Activated CD4-positive, alpha-beta T cell treated with anti-CD3 and anti-CD28 coated beads, Interleukin-2, amount 10 ng/mL, durations not matched to agents 7 days and 5 days (primary cell): ENCODE measurements at regions of chr13 and their contacts with region 1.

Region 1: GRCh38 chr13:48896312-48896711 is 79.4 kb upstream of the FNDC3A start:
- DNase-seq: no peak
- H3K4me3 Mint-ChIP-seq: no peak overlapping the region
- H3K27ac Mint-ChIP-seq: no peak overlapping the region
- H3K4me1 Mint-ChIP-seq: peaks cover 9% of the 10 kb centered on the region
- H3K27me3 Mint-ChIP-seq: peaks cover 11% of the 10 kb centered on the region

Region 2: DNA sequence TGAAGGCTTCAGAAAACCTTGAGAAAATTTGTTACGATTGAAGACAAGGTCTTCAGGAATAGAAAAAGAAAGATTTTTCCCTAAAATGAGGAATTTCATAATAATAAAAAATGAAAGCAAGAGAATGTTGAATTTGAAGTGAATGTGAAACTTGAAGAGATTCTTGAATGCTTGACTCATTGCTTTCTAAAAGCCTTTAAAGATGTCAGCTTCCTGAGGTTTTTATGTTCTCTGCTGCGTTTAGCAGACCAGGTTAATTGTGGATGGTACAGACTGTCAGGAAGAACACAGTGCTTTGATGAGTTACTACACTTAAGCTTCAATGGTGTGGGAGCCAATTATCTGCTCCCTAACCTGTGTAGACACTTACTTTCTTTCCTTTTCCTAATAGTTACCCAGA is 16.9 kb before region 1 on chr13:
- CTCF ChIA-PET with region 1: interaction called, 15 read pairs
- POLR2A ChIA-PET with region 1: no interaction called
- DNase-seq: no peak
- H3K4me3 Mint-ChIP-seq: no peak overlapping the region
- H3K27ac Mint-ChIP-seq: no peak overlapping the region
- H3K4me1 Mint-ChIP-seq: peaks cover 36% of the 10 kb centered on the region
- H3K27me3 Mint-ChIP-seq: peaks cover 7% of the 10 kb centered on the region